GM12878 (cell line): ENCODE measurements at regions of chr5 and their contacts with region 1.

Region 1: GRCh38 chr5:148740966-148741742 is 85.3 kb upstream of the ADRB2 start:
- DNase-seq: no peak
- ATAC-seq: peak; percentile 78
- H3K4me3 ChIP-seq: no peak overlapping the region
- H3K27ac ChIP-seq: no peak overlapping the region
- H3K4me1 ChIP-seq: no peaks in the 10 kb centered on the region
- H3K27me3 ChIP-seq: no peaks in the 10 kb centered on the region
- CTCF ChIP-seq: peak; percentile 57 to 73 (median 71)
- EP300 ChIP-seq: no peak
- POLR2A ChIP-seq: no peak
- RAD21 ChIP-seq: peak; percentile 74

Region 2: DNA sequence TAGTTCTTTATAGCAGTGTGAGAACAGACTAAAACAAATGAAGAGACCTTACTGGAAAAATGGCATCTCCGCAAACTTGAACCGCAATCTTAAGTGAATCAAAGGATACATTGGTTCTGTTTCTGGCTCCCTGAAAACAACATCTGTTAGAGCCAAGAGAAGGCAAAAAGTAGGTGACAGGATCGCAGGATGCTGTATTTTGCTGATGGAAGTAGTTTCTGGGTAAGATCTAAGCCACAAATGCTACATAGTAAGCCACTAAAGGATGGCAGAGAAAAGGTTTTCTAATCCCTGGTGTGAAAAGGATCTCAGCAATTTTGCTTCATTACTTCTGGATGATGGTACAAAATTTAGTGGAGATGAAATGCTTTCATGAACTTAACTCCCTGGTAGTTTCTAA is 23.5 kb before region 1 on chr5:
- CTCF ChIA-PET with region 1: no interaction called
- POLR2A ChIA-PET with region 1: no interaction called
- RAD21 ChIA-PET with region 1: no interaction called
- SMC1A ChIA-PET with region 1: no interaction called
- in situ Hi-C with region 1: no loop called
- intact Hi-C with region 1: no loop called
- DNase-seq: no peak
- ATAC-seq: no peak
- H3K4me3 ChIP-seq: no peak overlapping the region
- H3K27ac ChIP-seq: no peak overlapping the region
- H3K4me1 ChIP-seq: no peaks in the 10 kb centered on the region
- H3K27me3 ChIP-seq: no peaks in the 10 kb centered on the region; a peak in 2 of 4 replicates
- CTCF ChIP-seq: no peak
- EP300 ChIP-seq: no peak
- POLR2A ChIP-seq: no peak
- RAD21 ChIP-seq: no peak

Region 3: GRCh38 chr5:148805326-148806290 is 64.5 kb after region 1 on chr5:
- CTCF ChIA-PET with region 1: interaction called, 13 read pairs
- POLR2A ChIA-PET with region 1: interaction called, 3 read pairs
- RAD21 ChIA-PET with region 1: interaction called, 7 read pairs
- SMC1A ChIA-PET with region 1: interaction called, 13 read pairs
- in situ Hi-C with region 1: no loop called
- intact Hi-C with region 1: loop called (anchors 5 kb)
- DNase-seq: peak; percentile 79
- ATAC-seq: peak; percentile 64
- H3K4me3 ChIP-seq: peak overlapping the region; percentile 12; the same call in 1 of the 2 replicates
- H3K27ac ChIP-seq: peak overlapping the region; percentile 79
- H3K4me1 ChIP-seq: peaks cover 58% of the 10 kb centered on the region
- H3K27me3 ChIP-seq: no peaks in the 10 kb centered on the region
- CTCF ChIP-seq: no peak
- EP300 ChIP-seq: peak in 1 of 2 experiments; percentile 60; a peak in 1 of 4 replicates
- POLR2A ChIP-seq: no peak
- RAD21 ChIP-seq: no peak

Region 4: GRCh38 chr5:148826053-148826738 is 85.0 kb after region 1 on chr5 and contains the start of gene ADRB2:
- CTCF ChIA-PET with region 1: interaction called, 66 read pairs
- POLR2A ChIA-PET with region 1: no interaction called
- RAD21 ChIA-PET with region 1: interaction called, 4 read pairs
- SMC1A ChIA-PET with region 1: interaction called, 20 read pairs
- in situ Hi-C with region 1: no loop called
- intact Hi-C with region 1: loop called (anchors 2 kb)
- DNase-seq: peak; percentile 72
- ATAC-seq: peak; percentile 97
- H3K4me3 ChIP-seq: peak within 1 kb of the TSS; percentile 82
- H3K27ac ChIP-seq: 0 out of 2 replicates have a peak within 1 kb of the TSS, but pooled peaks have one; percentile 13
- H3K4me1 ChIP-seq: peaks cover 9% of the 10 kb centered on the region
- H3K27me3 ChIP-seq: no peaks in the 10 kb centered on the region; a peak in 1 of 4 replicates
- CTCF ChIP-seq: no peak
- EP300 ChIP-seq: no peak
- POLR2A ChIP-seq: peak; percentile 87
- RAD21 ChIP-seq: no peak
- polyA plus RNA-seq, gene ADRB2: 0.03 to 0.04 TPM

Region 5: GRCh38 chr5:148949841-148950470 is 208.8 kb after region 1 on chr5:
- CTCF ChIA-PET with region 1: interaction called, 523 read pairs
- POLR2A ChIA-PET with region 1: no interaction called
- RAD21 ChIA-PET with region 1: interaction called, 6 read pairs
- SMC1A ChIA-PET with region 1: interaction called, 143 read pairs
- in situ Hi-C with region 1: loop called (anchors 5 kb)
- intact Hi-C with region 1: no loop called
- DNase-seq: no peak
- ATAC-seq: no peak
- H3K4me3 ChIP-seq: no peak overlapping the region
- H3K27ac ChIP-seq: no peak overlapping the region
- H3K4me1 ChIP-seq: no peaks in the 10 kb centered on the region
- H3K27me3 ChIP-seq: no peaks in the 10 kb centered on the region; a peak in 1 of 4 replicates
- CTCF ChIP-seq: no peak
- EP300 ChIP-seq: no peak
- POLR2A ChIP-seq: no peak
- RAD21 ChIP-seq: no peak

Region 6: GRCh38 chr5:148998174-148998797 is 257.1 kb after region 1 on chr5:
- CTCF ChIA-PET with region 1: interaction called, 105 read pairs
- POLR2A ChIA-PET with region 1: no interaction called
- RAD21 ChIA-PET with region 1: interaction called, 7 read pairs
- SMC1A ChIA-PET with region 1: interaction called, 17 read pairs
- in situ Hi-C with region 1: no loop called
- intact Hi-C with region 1: no loop called
- DNase-seq: no peak
- ATAC-seq: peak; percentile 86
- H3K4me3 ChIP-seq: no peak overlapping the region
- H3K27ac ChIP-seq: no peak overlapping the region
- H3K4me1 ChIP-seq: no peaks in the 10 kb centered on the region
- H3K27me3 ChIP-seq: no peaks in the 10 kb centered on the region
- CTCF ChIP-seq: peak; percentile 49 to 56 (median 52); a peak in 5 of 6 replicates
- EP300 ChIP-seq: no peak
- POLR2A ChIP-seq: no peak
- RAD21 ChIP-seq: peak; percentile 56

Region 7: DNA sequence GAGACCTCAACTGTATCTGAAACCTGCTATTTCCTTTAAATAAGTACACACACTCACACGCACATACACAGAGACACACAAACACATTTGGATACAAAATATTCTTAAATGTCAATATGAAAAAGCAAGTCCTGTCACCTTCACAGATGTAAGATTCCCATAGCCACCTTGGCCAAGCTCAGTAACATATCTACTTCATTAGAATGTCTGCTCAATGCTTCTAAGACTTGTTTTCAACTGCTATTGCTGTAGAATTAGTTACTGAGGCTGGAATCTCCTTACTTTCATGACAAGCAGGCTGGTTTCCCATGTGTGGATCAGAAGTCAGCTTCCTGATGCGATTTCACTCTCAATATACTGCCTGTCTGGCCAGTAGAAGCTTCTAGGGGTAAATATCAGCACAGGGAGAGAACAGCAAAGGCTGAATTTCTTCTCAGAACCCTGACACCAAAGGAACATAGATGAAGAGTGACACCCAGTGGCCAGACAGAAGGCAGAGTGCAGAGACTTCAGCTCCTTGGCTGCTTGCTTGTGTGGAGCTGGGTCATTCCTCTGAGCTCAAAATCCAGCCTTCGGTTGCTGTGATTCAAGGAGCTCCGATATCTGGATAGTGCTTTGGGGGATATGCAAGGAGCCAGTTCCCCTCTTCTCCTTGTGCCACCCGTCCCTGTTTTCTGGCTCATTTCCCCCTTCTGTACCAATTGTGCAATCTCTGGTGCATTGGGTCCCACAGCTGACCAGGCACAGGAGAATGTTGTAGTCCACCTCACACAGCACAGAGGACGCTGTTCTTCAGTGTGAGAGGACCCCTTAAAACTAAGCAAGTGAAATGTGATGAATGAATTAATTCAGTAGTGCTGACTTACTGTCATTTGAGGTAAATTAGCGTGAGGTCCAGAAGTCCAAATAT is 373.5 kb after region 1 on chr5:
- CTCF ChIA-PET with region 1: interaction called, 15 read pairs
- POLR2A ChIA-PET with region 1: no interaction called
- RAD21 ChIA-PET with region 1: interaction called, 3 read pairs
- SMC1A ChIA-PET with region 1: interaction called, 7 read pairs
- in situ Hi-C with region 1: loop called (anchors 10 kb)
- intact Hi-C with region 1: no loop called
- DNase-seq: no peak
- ATAC-seq: peak; percentile 97
- H3K4me3 ChIP-seq: no peak overlapping the region
- H3K27ac ChIP-seq: no peak overlapping the region
- H3K4me1 ChIP-seq: no peaks in the 10 kb centered on the region
- H3K27me3 ChIP-seq: no peaks in the 10 kb centered on the region
- CTCF ChIP-seq: peak; percentile 66 to 74 (median 73)
- EP300 ChIP-seq: no peak
- POLR2A ChIP-seq: no peak
- RAD21 ChIP-seq: peak; percentile 69